CD8-positive, alpha-beta T cell (primary cell): ENCODE measurements at regions of chr16 and their contacts with region 1.

Region 1: GRCh38 chr16:63856537-63856936 is 1265.3 kb downstream of the CDH11 start:
- DNase-seq: no peak
- ATAC-seq: no peak
- H3K4me3 ChIP-seq: no peak overlapping the region
- H3K4me3 Mint-ChIP-seq: no peak overlapping the region
- H3K27ac ChIP-seq: no peak overlapping the region
- H3K27ac Mint-ChIP-seq: no peak overlapping the region
- H3K4me1 ChIP-seq: no peaks in the 10 kb centered on the region
- H3K4me1 Mint-ChIP-seq: no peaks in the 10 kb centered on the region
- H3K27me3 ChIP-seq: no peaks in the 10 kb centered on the region
- H3K27me3 Mint-ChIP-seq: no peaks in the 10 kb centered on the region
- CTCF ChIP-seq: no peak

Region 2: DNA sequence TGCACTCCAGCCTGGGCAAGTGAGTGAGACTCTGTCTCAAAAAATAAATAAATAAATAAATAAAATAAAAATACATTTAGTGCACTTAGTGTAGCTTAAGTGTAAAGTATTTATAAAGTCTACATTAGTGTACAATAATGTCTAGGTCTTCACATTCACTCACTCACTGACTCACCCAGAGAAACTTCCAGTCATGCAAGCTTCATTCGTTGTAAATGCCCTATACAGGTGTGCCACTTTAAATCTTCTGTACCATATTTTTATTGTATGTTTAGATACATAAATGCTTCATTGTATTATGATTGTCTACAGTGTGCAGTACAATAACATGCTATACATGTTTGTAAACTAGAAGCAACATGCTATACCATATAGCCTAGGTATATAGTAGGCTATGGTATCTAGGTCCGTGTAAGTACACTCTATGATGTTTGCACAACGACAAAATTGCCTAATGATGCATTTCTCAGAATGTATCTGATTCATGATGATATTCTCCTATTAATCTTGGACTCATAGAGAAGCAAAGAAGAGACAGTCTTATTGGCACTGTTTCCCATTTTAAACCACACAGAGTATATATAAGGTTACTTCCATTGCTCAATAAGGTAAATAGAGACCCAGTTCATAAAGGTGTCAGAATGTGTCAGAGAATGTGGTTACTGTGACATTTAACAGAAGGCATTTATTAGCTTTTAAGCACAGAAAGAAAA is 49.6 kb before region 1 on chr16:
- CTCF ChIA-PET with region 1: no interaction called
- POLR2A ChIA-PET with region 1: no interaction called
- intact Hi-C with region 1: loop called in 1 of 2 experiments (anchors 10 kb)
- DNase-seq: no peak
- ATAC-seq: no peak
- H3K4me3 ChIP-seq: no peak overlapping the region
- H3K4me3 Mint-ChIP-seq: no peak overlapping the region
- H3K27ac ChIP-seq: no peak overlapping the region
- H3K27ac Mint-ChIP-seq: no peak overlapping the region
- H3K4me1 ChIP-seq: no peaks in the 10 kb centered on the region
- H3K4me1 Mint-ChIP-seq: no peaks in the 10 kb centered on the region
- H3K27me3 ChIP-seq: no peaks in the 10 kb centered on the region
- H3K27me3 Mint-ChIP-seq: no peaks in the 10 kb centered on the region
- CTCF ChIP-seq: no peak

Region 3: GRCh38 chr16:64311241-64311640 is 454.7 kb after region 1 on chr16:
- CTCF ChIA-PET with region 1: no interaction called
- POLR2A ChIA-PET with region 1: no interaction called
- intact Hi-C with region 1: no loop called
- DNase-seq: no peak
- ATAC-seq: no peak
- H3K4me3 ChIP-seq: no peak overlapping the region
- H3K4me3 Mint-ChIP-seq: no peak overlapping the region
- H3K27ac ChIP-seq: no peak overlapping the region
- H3K27ac Mint-ChIP-seq: no peak overlapping the region
- H3K4me1 ChIP-seq: no peaks in the 10 kb centered on the region
- H3K4me1 Mint-ChIP-seq: no peaks in the 10 kb centered on the region
- H3K27me3 ChIP-seq: no peaks in the 10 kb centered on the region
- H3K27me3 Mint-ChIP-seq: no peaks in the 10 kb centered on the region
- CTCF ChIP-seq: no peak